Ascending aorta (tissue), 2 donors: ENCODE measurements at regions of chr7 and their contacts with region 1.

Region 1: GRCh38 chr7:78479348-78479747 is 680.8 kb downstream of the PHTF2 start:
- DNase-seq: no peak
- H3K4me3 ChIP-seq: no peak overlapping the region
- H3K27ac ChIP-seq: peak overlapping the region in 1 of 2 donors; percentile 19
- H3K4me1 ChIP-seq: peaks cover 0 to 9% of the 10 kb centered on the region in 2 donors
- H3K27me3 ChIP-seq: no peaks in the 10 kb centered on the region
- CTCF ChIP-seq: no peak

Region 2: DNA sequence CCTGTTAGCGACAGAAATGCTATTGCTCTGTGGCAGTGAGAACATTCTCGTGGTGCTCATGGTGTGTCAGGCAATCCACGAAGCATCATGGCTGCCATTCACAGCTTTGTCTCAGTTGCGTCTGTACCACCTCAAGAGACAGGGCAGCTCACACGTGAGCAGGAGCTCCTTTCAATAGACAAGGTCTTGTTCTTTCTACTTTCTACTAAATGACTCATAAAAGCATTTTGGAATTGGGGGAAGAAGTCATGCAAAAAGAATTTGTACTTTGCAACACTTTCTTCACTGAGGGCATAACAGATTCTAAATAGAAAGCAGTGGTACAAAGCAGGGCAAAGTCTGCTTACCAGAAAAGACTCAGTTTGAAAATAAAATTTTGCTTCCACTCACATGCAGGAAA is 42.2 kb before region 1 on chr7:
- intact Hi-C with region 1: loop called (anchors 5 kb)
- DNase-seq: no peak
- H3K4me3 ChIP-seq: no peak overlapping the region
- H3K27ac ChIP-seq: peak overlapping the region; percentile 63 to 74
- H3K4me1 ChIP-seq: peaks cover 7 to 22% of the 10 kb centered on the region in 2 donors
- H3K27me3 ChIP-seq: no peaks in the 10 kb centered on the region
- CTCF ChIP-seq: no peak